ENCODE measurements at regions of chr20 and their contacts with region 1.

Region 1: GRCh38 chr20:3250091-3250504 is 11.1 kb upstream of the SLC4A11 start:
- DNase-seq: peak; percentile 62
- ATAC-seq: peak; percentile 52
- H3K4me3 ChIP-seq: no peak overlapping the region
- H3K27ac ChIP-seq: no peak overlapping the region
- H3K4me1 ChIP-seq: no peaks in the 10 kb centered on the region
- H3K27me3 ChIP-seq: no peaks in the 10 kb centered on the region
- CTCF ChIP-seq: peak; percentile 76

Region 2: GRCh38 chr20:3080939-3081388 is 169.1 kb before region 1 on chr20:
- CTCF ChIA-PET with region 1: no interaction called
- POLR2A ChIA-PET with region 1: interaction called, 11 read pairs
- intact Hi-C with region 1: no loop called
- DNase-seq: no peak
- ATAC-seq: peak; percentile 55
- H3K4me3 ChIP-seq: no peak overlapping the region
- H3K27ac ChIP-seq: no peak overlapping the region
- H3K4me1 ChIP-seq: no peaks in the 10 kb centered on the region
- H3K27me3 ChIP-seq: peaks cover 20% of the 10 kb centered on the region
- CTCF ChIP-seq: no peak

Region 3: DNA sequence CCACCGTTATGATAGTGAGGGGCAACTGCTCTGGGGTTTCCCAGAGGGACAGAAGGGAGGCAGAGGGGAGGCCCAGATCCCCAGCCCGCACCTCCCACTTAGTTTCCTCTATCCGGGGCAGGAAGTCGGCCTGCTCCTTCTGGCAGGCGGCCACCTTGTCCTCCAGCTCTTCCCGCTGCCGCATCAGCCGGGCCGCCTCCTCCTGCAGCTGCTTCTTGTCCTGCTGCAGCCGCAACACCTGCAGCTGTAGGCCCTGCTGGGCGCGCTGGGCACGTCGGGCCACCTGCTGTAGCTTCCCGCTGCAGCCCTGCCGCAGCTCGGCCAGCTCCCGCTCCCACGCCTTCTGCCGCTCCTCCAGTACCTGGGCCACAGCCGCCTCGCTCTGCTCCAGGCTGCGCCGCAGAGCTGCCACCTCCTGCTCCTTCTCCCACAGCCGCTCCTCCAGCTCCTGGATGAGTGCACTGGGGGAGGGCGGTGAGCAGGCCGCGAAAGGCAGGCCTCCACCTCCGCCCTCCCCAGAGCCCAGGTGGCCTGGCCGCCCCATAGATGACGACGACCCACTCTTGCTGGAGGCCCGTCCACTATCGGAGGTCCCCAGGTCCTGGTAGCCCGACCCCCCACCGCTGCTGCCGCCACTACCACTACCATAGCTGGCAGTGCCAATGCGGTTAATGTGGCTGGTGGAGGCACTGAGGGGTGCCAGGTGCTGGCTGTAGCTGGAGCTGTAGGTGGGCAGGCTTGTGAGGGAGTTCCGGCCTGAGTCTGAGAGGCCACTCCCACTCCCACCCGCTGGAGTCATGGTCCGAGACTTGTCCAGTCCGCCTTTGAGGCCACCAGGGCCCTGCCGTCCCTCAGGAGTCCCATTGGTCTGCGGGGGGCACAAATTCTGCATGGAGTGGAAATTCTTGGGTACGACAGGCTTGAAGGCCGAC is 84.4 kb before region 1 on chr20:
- CTCF ChIA-PET with region 1: no interaction called
- POLR2A ChIA-PET with region 1: interaction called, 38 read pairs
- intact Hi-C with region 1: no loop called
- DNase-seq: peak; percentile 35
- ATAC-seq: peak; percentile 60
- H3K4me3 ChIP-seq: peak overlapping the region; percentile 57; the same call in 1 of the 2 replicates
- H3K27ac ChIP-seq: no peak overlapping the region
- H3K4me1 ChIP-seq: no peaks in the 10 kb centered on the region; the same call in 1 of the 2 replicates
- H3K27me3 ChIP-seq: no peaks in the 10 kb centered on the region
- CTCF ChIP-seq: no peak

Region 4: DNA sequence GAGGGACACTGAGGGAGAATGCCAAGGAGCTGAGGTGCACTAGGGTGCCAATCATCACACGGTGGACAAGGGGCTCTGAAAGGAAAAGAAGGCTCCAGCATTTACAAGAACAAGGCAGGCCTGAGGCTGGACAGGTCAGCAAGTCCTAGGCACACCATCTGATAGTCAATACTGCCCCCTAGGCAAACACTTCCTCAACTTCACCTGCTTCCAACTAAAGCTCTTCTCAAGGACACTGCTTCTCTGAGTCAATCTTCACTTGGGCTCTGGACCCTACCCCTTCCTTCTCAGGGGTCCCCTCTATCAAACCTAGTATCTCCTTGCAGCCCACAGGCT is 26.6 kb after region 1 on chr20:
- CTCF ChIA-PET with region 1: interaction called, 3 read pairs
- POLR2A ChIA-PET with region 1: interaction called, 11 read pairs
- intact Hi-C with region 1: no loop called
- DNase-seq: peak; percentile 65
- ATAC-seq: peak; percentile 90
- H3K4me3 ChIP-seq: no peak overlapping the region
- H3K27ac ChIP-seq: no peak overlapping the region
- H3K4me1 ChIP-seq: no peaks in the 10 kb centered on the region
- H3K27me3 ChIP-seq: no peaks in the 10 kb centered on the region
- CTCF ChIP-seq: peak; percentile 72

Region 5: DNA sequence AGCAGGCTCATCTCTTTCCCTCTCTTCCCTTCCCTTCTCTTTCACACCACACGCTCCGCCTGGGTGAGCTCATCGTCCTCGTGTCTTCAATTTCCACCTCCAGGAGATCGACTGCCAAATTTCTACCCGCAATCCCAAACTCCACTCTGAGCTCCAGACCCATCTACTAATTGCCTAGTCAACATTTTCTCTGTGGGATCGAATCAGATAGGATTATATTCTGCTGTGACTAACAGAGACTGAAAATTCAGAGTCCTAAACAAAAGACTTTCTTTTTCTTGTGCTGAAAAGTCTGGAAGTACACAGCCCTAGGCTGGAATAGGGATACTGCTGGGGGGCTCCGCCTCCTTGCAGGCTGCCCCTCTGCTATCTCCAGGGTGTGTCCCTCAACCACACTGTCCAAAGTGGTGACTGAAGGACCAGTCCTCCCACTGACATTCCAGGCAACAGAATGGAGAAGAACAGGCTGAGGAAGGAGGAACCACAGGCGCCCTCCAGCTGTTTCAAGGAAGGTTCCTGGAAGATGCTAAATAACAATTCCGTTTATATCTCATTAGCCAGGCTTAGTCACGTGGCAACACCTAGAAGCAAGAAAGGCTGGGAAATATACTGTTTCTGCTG is 477.4 kb after region 1 on chr20:
- CTCF ChIA-PET with region 1: no interaction called
- POLR2A ChIA-PET with region 1: no interaction called
- intact Hi-C with region 1: no loop called
- DNase-seq: peak; percentile 42
- ATAC-seq: peak; percentile 57
- H3K4me3 ChIP-seq: peak overlapping the region; percentile 47; the same call in 1 of the 2 replicates
- H3K27ac ChIP-seq: no peak overlapping the region
- H3K4me1 ChIP-seq: peaks cover 20% of the 10 kb centered on the region
- H3K27me3 ChIP-seq: no peaks in the 10 kb centered on the region
- CTCF ChIP-seq: no peak

Measured in PC-3 (cell line).